Activated CD4-positive, alpha-beta memory T cell treated with anti-CD3 and anti-CD28 coated beads for 36 hours (primary cell): ENCODE measurements at regions of chr11 and their contacts with region 1.

Region 1: GRCh38 chr11:128552783-128553661 is 34.3 kb downstream of the ETS1 start:
- DNase-seq: peak; percentile 72
- H3K4me3 Mint-ChIP-seq: peak overlapping the region; percentile 70
- H3K27ac Mint-ChIP-seq: peak overlapping the region; percentile 94
- H3K4me1 Mint-ChIP-seq: peaks cover 65% of the 10 kb centered on the region
- H3K27me3 Mint-ChIP-seq: no peaks in the 10 kb centered on the region

Region 2: GRCh38 chr11:128497061-128497775 is 55.8 kb before region 1 on chr11:
- CTCF ChIA-PET with region 1: interaction called, 3 read pairs
- POLR2A ChIA-PET with region 1: interaction called, 7 read pairs
- intact Hi-C with region 1: loop called (anchors 1 kb)
- DNase-seq: peak; percentile 67
- H3K4me3 Mint-ChIP-seq: peak overlapping the region; percentile 71
- H3K27ac Mint-ChIP-seq: peak overlapping the region; percentile 91
- H3K4me1 Mint-ChIP-seq: peaks cover 95% of the 10 kb centered on the region
- H3K27me3 Mint-ChIP-seq: no peaks in the 10 kb centered on the region

Region 3: GRCh38 chr11:128506999-128507611 is 45.9 kb before region 1 on chr11:
- CTCF ChIA-PET with region 1: interaction called, 6 read pairs
- POLR2A ChIA-PET with region 1: interaction called, 7 read pairs
- intact Hi-C with region 1: loop called (anchors 5 kb)
- DNase-seq: peak; percentile 74
- H3K4me3 Mint-ChIP-seq: peak overlapping the region; percentile 77
- H3K27ac Mint-ChIP-seq: peak overlapping the region; percentile 96
- H3K4me1 Mint-ChIP-seq: peaks cover 90% of the 10 kb centered on the region
- H3K27me3 Mint-ChIP-seq: no peaks in the 10 kb centered on the region

Region 4: DNA sequence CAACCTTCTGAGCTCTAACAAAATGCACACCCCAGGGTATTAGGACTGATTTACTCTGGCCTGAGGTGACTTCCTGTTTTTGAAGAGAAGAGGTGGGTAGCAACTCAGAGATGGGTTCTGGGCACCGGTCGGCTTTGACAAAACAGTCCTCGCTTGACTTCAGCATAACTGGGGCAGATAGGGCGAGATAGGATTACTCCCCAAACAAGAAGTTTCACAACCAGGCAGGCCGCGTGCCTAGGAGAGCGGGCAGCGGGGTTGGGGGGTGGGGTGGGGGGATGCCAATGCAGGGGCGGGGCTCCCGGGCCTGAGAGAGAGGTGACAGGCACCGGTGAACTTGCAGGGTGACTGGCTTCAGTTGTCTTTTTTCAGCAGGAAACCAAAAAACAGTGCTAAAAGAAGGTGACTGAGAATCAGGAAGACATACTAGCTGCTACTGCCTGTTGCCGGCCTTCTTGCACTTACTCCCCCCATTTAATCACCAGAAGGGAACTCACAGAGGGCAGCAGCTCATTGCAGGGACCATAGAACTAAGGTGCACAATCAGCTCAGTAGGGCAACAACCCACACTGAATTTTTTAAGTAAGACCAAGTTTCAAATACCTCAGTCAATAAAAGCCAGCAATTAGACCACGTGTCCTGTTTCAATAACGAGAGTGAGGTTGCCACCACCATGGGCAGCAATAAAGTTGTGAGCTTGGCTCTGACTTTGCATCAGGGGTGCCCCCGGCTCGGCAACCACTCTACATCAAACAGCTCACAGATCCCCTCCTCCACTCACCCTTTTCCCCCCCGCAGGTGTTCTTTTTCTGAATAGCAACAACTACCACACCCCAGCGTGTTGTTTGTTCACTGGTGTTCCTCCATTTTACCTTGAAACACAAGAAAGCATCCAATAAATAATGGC is 71.5 kb after region 1 on chr11:
- CTCF ChIA-PET with region 1: interaction called, 9 read pairs
- POLR2A ChIA-PET with region 1: interaction called, 14 read pairs
- intact Hi-C with region 1: loop called (anchors 1 kb)
- DNase-seq: peak; percentile 83
- H3K4me3 Mint-ChIP-seq: peak overlapping the region; percentile 57
- H3K27ac Mint-ChIP-seq: peak overlapping the region; percentile 94
- H3K4me1 Mint-ChIP-seq: peaks cover 95% of the 10 kb centered on the region
- H3K27me3 Mint-ChIP-seq: no peaks in the 10 kb centered on the region